B cell (primary cell): ENCODE measurements at regions of chr16 and their contacts with region 1.

Region 1: DNA sequence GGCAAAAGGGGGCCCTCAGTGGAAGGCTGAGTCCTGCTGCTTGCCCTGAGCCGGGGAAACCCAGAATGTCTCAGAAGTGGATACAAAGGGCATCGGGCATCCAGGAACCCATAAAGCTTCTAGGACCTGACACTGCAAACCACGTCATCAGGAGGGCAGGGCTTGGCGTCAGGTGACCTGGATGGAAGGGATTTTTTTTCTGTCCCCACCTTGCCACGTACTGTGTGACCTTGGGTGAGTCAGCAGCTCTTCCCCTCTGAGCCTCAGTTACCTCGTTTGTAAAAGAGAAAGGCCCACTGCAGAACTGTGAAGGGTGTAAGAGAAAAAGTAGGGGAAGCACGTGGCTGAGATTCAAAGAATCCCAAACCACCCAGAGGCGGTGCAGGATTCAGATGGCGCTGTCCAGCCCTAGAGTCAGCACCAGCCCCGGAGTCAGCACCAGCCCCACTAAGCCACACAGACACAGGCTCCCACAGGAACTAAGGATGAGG is 53.7 kb downstream of the C16orf95 start:
- DNase-seq: no peak
- ATAC-seq: no peak
- H3K4me3 ChIP-seq: no peak overlapping the region
- H3K4me3 Mint-ChIP-seq: no peak overlapping the region
- H3K27ac ChIP-seq: no peak overlapping the region
- H3K27ac Mint-ChIP-seq: no peak overlapping the region
- H3K4me1 ChIP-seq: no peaks in the 10 kb centered on the region
- H3K4me1 Mint-ChIP-seq: no peaks in the 10 kb centered on the region
- H3K27me3 ChIP-seq: no peaks in the 10 kb centered on the region
- H3K27me3 Mint-ChIP-seq: no peaks in the 10 kb centered on the region
- CTCF ChIP-seq: no peak

Region 2: DNA sequence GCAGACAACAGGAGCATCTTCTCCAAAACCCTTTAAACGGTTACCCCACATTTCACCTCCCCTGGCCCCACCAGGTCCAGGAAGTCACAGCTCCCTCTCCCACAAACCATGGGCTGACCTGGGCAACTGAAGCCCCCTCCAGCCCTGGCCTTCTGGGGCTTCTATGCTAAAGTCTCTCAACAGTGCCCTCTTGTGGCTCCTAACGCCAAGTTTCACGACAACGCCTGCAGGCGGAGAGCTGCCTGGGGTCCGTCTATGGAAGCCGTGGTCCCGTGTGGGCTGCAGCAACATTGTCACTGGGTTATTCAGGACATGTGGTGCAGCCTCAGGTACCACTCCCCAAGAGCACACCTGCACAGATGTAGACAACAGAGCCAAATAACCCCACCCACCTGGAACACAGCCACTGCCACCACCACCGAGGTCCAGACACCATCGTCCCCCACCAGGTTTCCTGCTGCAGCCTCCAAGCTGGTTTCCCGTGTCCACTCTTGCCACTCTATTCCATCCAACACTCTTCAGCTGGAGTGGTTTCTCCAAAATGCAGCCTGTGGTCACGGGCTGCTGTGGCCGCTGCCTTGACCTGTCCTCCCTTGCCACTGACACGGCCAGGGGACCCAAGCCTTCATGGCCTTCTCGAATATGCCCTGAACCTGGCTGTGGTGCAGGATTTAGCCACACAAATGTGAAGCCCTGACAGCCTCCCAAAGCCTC is 34.6 kb after region 1 on chr16:
- CTCF ChIA-PET with region 1: no interaction called
- POLR2A ChIA-PET with region 1: interaction called, 11 read pairs
- intact Hi-C with region 1: no loop called
- DNase-seq: peak; percentile 54
- ATAC-seq: no peak
- H3K4me3 ChIP-seq: no peak overlapping the region
- H3K4me3 Mint-ChIP-seq: no peak overlapping the region
- H3K27ac ChIP-seq: no peak overlapping the region
- H3K27ac Mint-ChIP-seq: no peak overlapping the region
- H3K4me1 ChIP-seq: peaks cover 0 to 3% of the 10 kb centered on the region in 2 donors
- H3K4me1 Mint-ChIP-seq: no peaks in the 10 kb centered on the region
- H3K27me3 ChIP-seq: no peaks in the 10 kb centered on the region
- H3K27me3 Mint-ChIP-seq: no peaks in the 10 kb centered on the region
- CTCF ChIP-seq: peak; percentile 76

Region 3: DNA sequence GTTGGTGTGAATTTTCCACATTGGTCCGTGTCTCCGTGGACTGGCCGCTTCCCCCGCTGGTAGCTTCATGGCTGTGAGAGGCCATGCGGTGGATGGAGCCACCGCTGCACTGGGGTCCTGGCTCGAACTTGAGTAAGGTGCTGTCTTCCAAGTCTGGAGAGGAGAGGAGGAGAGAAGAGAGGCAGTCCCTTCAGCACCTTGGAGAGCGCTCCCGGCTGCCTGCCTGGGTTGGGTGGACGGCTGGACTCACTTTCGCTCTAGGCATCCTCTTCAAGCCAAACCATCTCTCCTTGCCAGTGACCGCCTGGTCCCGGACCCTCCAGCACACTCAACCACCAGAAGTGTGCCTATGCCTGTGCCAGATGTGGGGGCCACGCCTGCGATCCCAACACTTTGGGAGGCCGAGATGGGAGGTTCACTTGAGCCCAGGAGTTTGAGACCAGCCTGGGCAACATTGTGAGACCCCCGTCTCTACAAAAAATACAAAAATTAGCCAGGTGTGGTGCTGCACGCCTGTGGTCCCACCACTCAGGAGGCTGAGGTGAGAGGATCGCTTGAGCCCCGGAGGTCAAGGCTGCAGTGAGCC is 345.0 kb after region 1 on chr16:
- CTCF ChIA-PET with region 1: no interaction called
- POLR2A ChIA-PET with region 1: no interaction called
- intact Hi-C with region 1: no loop called
- DNase-seq: peak; percentile 38
- ATAC-seq: no peak
- H3K4me3 ChIP-seq: no peak overlapping the region
- H3K4me3 Mint-ChIP-seq: no peak overlapping the region
- H3K27ac ChIP-seq: no peak overlapping the region
- H3K27ac Mint-ChIP-seq: no peak overlapping the region
- H3K4me1 ChIP-seq: peaks cover 0 to under 1% of the 10 kb centered on the region in 2 donors
- H3K4me1 Mint-ChIP-seq: peaks cover 4% of the 10 kb centered on the region
- H3K27me3 ChIP-seq: peaks cover 0 to 35% (median 10%) of the 10 kb centered on the region in 4 experiments
- H3K27me3 Mint-ChIP-seq: peaks cover 42% of the 10 kb centered on the region
- CTCF ChIP-seq: no peak